Activated CD4-positive, alpha-beta memory T cell treated with anti-CD3 and anti-CD28 coated beads for 36 hours (primary cell): ENCODE measurements at regions of chr17 and their contacts with region 1.

Region 1: GRCh38 chr17:40559954-40560591 is 5.2 kb downstream of the CCR7 start:
- DNase-seq: peak; percentile 90
- H3K4me3 Mint-ChIP-seq: peak overlapping the region; percentile 93
- H3K27ac Mint-ChIP-seq: peak overlapping the region; percentile 96
- H3K4me1 Mint-ChIP-seq: peaks cover 80% of the 10 kb centered on the region
- H3K27me3 Mint-ChIP-seq: no peaks in the 10 kb centered on the region

Region 2: GRCh38 chr17:40312131-40312731 is 247.8 kb before region 1 on chr17:
- CTCF ChIA-PET with region 1: no interaction called
- POLR2A ChIA-PET with region 1: no interaction called
- intact Hi-C with region 1: no loop called
- DNase-seq: no peak
- H3K4me3 Mint-ChIP-seq: no peak overlapping the region
- H3K27ac Mint-ChIP-seq: no peak overlapping the region
- H3K4me1 Mint-ChIP-seq: peaks cover 55% of the 10 kb centered on the region
- H3K27me3 Mint-ChIP-seq: no peaks in the 10 kb centered on the region

Region 3: GRCh38 chr17:40362696-40363110 is 197.4 kb before region 1 on chr17:
- CTCF ChIA-PET with region 1: interaction called, 39 read pairs
- POLR2A ChIA-PET with region 1: no interaction called
- intact Hi-C with region 1: loop called (anchors 2 kb)
- DNase-seq: peak; percentile 93
- H3K4me3 Mint-ChIP-seq: peak overlapping the region; percentile 42
- H3K27ac Mint-ChIP-seq: no peak overlapping the region
- H3K4me1 Mint-ChIP-seq: peaks cover 10% of the 10 kb centered on the region
- H3K27me3 Mint-ChIP-seq: peaks cover 14% of the 10 kb centered on the region

Region 4: DNA sequence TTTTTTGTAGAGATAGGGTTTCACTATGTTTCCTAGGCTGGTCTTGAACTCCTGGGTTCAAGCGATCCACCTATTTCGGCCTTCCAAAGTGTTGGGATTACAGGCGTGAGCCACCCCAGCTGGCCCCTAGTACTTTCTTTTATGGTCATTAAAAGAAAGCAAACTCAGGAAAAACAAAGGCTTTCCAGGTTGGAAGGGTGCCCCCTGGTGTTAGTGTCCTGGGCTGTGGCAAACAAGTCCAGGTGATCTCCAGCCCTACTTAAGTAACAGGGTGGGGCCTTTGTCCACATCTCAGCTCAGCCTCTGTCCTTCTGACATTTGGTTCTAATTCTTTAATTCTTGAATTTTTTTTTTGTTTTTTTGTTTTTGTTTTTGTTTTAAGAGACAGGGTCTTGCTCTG is 109.9 kb before region 1 on chr17:
- CTCF ChIA-PET with region 1: interaction called, 16 read pairs
- POLR2A ChIA-PET with region 1: no interaction called
- intact Hi-C with region 1: loop called (anchors 1 kb)
- DNase-seq: peak; percentile 55
- H3K4me3 Mint-ChIP-seq: no peak overlapping the region
- H3K27ac Mint-ChIP-seq: no peak overlapping the region
- H3K4me1 Mint-ChIP-seq: peaks cover 32% of the 10 kb centered on the region
- H3K27me3 Mint-ChIP-seq: no peaks in the 10 kb centered on the region

Region 5: DNA sequence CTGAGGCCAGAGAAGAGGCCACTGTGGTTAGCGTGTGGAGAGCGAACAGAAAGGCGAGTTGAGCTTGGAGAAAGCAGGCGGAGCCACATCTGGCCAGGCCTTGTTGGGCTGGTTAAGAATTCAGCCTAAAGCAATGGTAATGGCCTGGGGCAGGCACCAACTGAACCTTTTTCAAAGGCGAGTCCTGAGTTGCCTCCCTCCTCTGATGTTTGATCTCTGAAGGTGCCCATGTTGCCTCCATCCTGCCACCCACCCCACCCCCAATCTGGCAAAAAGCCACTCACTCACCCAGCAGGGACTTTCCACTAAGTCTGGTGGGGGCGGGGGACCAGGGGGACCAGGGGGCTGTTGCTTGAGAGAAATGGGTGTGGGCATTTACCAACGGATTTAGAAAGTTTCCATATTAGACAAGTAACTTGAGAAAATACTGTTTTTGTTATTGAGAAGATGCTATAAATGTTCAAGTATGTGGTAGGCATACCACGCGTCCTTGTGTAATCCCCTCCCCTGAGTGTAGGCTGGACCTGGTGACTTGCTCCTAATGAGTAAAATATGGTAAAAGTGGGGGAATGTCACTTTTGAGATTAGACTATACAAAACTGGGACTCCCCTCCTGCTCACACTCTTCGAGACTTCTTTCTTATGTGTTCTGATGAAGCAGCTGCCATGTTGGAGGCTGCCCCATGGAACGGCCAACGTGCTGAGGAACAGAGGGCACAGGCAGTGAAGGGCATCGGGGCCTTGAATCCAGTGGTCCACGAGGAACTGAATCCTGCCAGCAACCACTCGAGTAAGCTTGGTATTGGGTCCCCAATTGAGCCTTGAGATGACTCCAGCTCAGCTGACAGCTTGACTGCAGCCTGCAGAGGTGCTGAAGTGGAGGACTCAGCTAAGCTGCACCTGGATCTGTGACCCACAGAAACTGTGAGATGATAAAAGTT is 28.8 kb before region 1 on chr17:
- CTCF ChIA-PET with region 1: interaction called, 392 read pairs
- POLR2A ChIA-PET with region 1: interaction called, 17 read pairs
- intact Hi-C with region 1: loop called (anchors 1 kb)
- DNase-seq: peak; percentile 94
- H3K4me3 Mint-ChIP-seq: peak overlapping the region; percentile 75
- H3K27ac Mint-ChIP-seq: peak overlapping the region; percentile 94
- H3K4me1 Mint-ChIP-seq: peaks cover 67% of the 10 kb centered on the region
- H3K27me3 Mint-ChIP-seq: no peaks in the 10 kb centered on the region

Region 6: DNA sequence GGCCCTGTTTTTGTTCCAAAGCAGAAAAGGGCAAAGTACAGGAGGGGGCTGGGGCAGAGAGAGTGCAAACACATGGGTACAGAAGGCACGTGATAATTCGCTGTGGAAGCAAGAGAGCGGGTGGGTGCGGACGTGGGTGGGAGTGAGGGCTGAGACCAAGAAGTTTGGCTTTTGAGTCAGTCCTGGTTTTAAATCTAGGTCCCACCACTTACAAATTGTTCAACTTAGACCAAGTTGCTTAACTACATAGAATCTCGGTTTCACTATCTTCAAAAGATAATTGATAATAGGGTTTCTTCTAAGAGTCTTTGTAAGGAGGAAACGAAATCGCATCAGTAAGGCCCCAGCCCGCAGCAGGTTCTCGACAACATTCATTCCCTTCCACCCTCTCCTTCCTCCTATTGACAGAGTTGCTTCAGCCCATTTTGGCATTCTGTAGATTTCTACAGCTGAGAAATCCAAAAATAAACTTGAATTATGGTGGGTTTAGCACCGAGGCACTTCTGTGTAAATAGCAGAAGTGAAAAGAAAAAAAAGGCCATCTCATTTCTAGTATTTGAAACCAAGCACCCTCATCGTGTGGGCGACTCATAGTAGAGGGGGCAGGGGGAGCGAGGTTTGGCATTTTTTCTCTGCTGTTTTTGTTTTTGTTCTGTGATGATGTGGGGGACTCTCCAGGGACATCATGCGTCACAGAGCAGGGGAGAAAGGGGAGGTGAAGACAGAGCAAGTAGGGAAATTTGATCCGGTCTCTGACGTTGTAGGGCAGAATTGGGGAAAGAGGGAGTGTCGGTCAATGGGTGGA is 38.8 kb after region 1 on chr17:
- CTCF ChIA-PET with region 1: interaction called, 90 read pairs
- POLR2A ChIA-PET with region 1: interaction called, 166 read pairs
- intact Hi-C with region 1: loop called (anchors 1 kb)
- DNase-seq: peak; percentile 91
- H3K4me3 Mint-ChIP-seq: peak overlapping the region; percentile 43
- H3K27ac Mint-ChIP-seq: peak overlapping the region; percentile 94
- H3K4me1 Mint-ChIP-seq: peaks cover 87% of the 10 kb centered on the region
- H3K27me3 Mint-ChIP-seq: no peaks in the 10 kb centered on the region

Region 7: DNA sequence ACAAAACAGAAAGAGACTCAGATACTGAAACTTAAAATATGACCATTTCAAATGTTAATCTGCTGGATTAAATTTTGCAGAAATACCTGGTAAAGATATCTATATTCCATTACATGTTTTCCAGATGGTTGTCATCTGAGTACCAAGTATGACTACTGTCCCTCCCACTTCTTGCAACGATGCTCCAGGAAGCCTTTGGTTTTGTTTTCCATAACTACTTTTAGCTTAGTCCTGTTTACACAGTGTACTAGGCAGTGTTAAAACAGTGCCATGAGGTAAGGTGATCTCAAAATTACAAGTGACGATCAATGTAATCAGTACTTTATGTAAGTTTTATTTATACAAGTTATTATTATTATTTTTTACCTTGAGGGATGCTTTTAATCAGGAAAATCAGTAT is 69.8 kb after region 1 on chr17:
- CTCF ChIA-PET with region 1: interaction called, 15 read pairs
- POLR2A ChIA-PET with region 1: interaction called, 16 read pairs
- intact Hi-C with region 1: no loop called
- DNase-seq: no peak
- H3K4me3 Mint-ChIP-seq: no peak overlapping the region
- H3K27ac Mint-ChIP-seq: peak overlapping the region; percentile 43
- H3K4me1 Mint-ChIP-seq: peaks cover 22% of the 10 kb centered on the region
- H3K27me3 Mint-ChIP-seq: no peaks in the 10 kb centered on the region